ENCODE measurements at regions of chr2 and their contacts with region 1.

Region 1: GRCh38 chr2:172113617-172114016 is 10.9 kb upstream of the DLX2 start:
- DNase-seq: peak; percentile 15
- CTCF ChIP-seq: peak; percentile 25

Region 2: GRCh38 chr2:171852366-171852888 is 261.2 kb before region 1 on chr2:
- CTCF ChIA-PET with region 1: no interaction called
- POLR2A ChIA-PET with region 1: no interaction called
- DNase-seq: no peak
- CTCF ChIP-seq: no peak

Region 3: DNA sequence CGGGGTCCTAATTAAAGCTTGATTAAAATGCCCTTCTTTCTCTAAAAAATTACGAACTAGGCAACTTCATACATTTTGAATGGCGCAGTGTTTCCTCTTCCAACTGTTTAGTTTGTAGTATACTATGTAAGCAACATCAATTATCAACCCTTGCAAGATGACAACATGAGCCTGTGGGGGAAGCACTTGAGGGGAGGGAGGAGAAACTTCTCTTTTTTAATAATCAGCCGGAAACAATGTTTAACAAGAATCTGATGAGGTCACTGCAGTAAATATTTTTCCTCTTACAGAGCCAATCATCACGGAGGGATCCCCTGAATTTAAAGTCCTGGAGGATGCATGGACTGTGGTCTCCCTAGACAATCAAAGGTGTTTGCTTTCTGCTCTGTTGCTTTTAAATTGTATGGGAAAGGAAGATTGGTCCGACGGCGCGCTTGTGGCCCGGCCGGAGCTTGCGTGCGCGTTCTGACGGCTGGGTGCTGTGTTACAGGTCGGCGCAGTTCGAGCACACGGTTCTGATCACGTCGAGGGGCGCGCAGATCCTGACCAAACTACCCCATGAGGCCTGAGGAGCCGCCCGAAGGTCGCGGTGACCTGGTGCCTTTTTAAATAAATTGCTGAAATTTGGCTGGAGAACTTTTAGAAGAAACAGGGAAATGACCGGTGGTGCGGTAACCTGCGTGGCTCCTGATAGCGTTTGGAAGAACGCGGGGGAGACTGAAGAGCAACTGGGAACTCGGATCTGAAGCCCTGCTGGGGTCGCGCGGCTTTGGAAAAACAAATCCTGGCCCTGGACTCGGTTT is 33.6 kb before region 1 on chr2:
- CTCF ChIA-PET with region 1: no interaction called
- POLR2A ChIA-PET with region 1: no interaction called
- DNase-seq: peak; percentile 15
- CTCF ChIP-seq: no peak

Region 4: GRCh38 chr2:172102391-172103278 is 11.0 kb before region 1 on chr2 and contains the start of gene DLX2:
- CTCF ChIA-PET with region 1: interaction called, 20 read pairs
- POLR2A ChIA-PET with region 1: no interaction called
- DNase-seq: peak; percentile 88
- CTCF ChIP-seq: no peak

Region 5: DNA sequence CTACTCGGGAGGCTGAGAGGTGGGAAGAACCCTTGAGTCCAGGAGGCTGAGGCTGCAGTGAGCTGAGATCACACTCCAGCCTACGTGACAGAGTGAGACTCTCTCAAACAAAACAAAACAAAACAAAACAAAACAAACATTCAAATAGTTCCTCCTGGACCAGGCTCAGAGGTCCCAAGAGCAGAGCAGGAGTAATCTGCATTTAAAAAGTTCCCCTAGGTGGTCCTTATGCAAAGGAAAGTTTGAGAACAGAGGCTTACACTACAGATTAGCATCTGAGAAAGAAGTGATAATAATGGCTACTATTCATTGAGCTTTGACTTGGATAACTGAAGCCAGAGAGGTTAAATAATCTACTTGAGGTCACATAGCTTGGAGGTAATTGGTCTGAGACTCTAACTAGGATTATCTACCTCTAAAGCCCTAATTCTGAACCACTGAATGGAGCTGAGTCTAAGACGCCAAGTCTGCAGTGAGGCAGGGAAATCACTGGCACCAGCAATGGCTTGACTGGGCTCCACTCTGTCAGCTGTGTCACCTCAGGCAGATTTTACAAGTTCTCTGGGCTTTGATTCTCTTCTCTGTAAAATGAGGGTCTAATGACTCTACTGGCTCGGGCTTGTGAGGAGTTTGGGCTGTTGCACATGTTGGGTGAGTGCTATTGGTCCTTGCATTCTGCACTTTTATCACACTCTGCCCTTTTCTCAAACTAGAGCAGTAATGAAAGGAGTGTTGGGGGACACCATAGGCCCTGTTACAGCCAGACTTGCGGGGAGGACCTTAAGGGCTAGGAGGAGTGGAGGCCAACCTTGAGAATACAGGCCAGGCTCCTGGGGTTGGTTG is 18.3 kb after region 1 on chr2:
- CTCF ChIA-PET with region 1: interaction called, 19 read pairs
- POLR2A ChIA-PET with region 1: no interaction called
- DNase-seq: no peak
- CTCF ChIP-seq: no peak